Activated T-helper 1 cell treated with anti-CD3 and anti-CD28 coated beads, Interleukin-12 subunit alpha, Interleukin-12 subunit beta, Interleukin-2, Interleukin-4 antibody, amounts not matched to agents 30 ng/mL and 10 ng/mL and 1 ng/mL, durations not matched to agents 14 hours and 24 hours and 36 hours (primary cell): ENCODE measurements at regions of chr11 and their contacts with region 1.

Region 1: GRCh38 chr11:1572197-1573076 is at the start of gene DUSP8:
- DNase-seq: peak; percentile 89
- H3K4me3 Mint-ChIP-seq: peak within 1 kb of the TSS; percentile 37
- H3K27ac Mint-ChIP-seq: no peak within 1 kb of the TSS
- H3K4me1 Mint-ChIP-seq: no peaks in the 10 kb centered on the region
- H3K27me3 Mint-ChIP-seq: peaks cover 28% of the 10 kb centered on the region
- total RNA-seq, gene DUSP8: 2.3 and 2.4 TPM in 2 replicates

Region 2: GRCh38 chr11:910589-911195 is 661.7 kb before region 1 on chr11 and contains the start of gene CHID1:
- intact Hi-C with region 1: loop called (anchors 5 kb)
- DNase-seq: peak; percentile 89
- H3K4me3 Mint-ChIP-seq: peak within 1 kb of the TSS; percentile 96
- H3K27ac Mint-ChIP-seq: peak within 1 kb of the TSS; percentile 93
- H3K4me1 Mint-ChIP-seq: peaks cover 18% of the 10 kb centered on the region
- H3K27me3 Mint-ChIP-seq: no peaks in the 10 kb centered on the region
- total RNA-seq, gene CHID1: 108 and 110 TPM in 2 replicates

Region 3: DNA sequence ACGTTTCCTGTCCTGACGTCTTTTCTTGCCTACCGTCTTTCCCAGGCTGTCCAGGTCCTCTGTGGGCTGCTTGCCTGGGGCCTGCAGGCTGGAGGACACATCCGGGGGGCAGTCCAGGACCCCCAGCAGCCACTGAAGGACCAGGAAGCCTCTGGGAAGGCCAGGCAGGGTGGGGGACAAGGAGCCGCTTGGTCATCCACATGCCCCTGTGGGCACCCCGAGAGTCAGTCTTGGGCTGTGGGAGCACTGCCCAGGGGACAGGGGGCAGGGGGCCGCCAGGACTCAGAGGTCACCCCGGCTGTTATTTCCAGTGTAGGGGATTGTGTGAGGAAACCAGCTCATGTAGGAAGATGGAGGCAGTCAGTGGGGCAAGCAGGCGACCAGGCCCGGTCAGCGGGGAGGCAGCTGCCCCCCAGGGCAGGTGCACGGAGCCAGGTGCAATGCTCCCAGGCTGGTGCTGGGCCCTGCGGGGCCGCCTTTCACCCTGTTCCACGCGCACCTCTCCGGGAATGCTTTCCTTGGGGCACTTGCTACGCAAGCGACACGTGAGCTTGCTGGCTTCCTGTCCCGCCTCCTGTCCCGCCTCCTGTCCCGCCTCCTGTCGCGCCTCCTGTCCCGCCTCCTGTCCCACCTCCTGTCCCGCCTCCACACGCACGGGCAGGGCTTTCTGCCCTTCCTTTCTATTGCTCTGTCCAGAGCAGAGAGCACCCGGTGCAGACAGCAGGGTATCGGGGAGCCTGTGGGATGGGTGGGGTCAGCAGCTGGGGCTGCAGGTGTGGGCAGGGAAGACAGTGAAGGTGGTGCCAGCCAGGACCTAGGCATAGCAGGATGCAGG is 310.0 kb before region 1 on chr11:
- intact Hi-C with region 1: loop called (anchors 1 kb)
- DNase-seq: peak; percentile 70
- H3K4me3 Mint-ChIP-seq: peak overlapping the region; percentile 42
- H3K27ac Mint-ChIP-seq: peak overlapping the region; percentile 63
- H3K4me1 Mint-ChIP-seq: peaks cover 4% of the 10 kb centered on the region
- H3K27me3 Mint-ChIP-seq: no peaks in the 10 kb centered on the region

Region 4: DNA sequence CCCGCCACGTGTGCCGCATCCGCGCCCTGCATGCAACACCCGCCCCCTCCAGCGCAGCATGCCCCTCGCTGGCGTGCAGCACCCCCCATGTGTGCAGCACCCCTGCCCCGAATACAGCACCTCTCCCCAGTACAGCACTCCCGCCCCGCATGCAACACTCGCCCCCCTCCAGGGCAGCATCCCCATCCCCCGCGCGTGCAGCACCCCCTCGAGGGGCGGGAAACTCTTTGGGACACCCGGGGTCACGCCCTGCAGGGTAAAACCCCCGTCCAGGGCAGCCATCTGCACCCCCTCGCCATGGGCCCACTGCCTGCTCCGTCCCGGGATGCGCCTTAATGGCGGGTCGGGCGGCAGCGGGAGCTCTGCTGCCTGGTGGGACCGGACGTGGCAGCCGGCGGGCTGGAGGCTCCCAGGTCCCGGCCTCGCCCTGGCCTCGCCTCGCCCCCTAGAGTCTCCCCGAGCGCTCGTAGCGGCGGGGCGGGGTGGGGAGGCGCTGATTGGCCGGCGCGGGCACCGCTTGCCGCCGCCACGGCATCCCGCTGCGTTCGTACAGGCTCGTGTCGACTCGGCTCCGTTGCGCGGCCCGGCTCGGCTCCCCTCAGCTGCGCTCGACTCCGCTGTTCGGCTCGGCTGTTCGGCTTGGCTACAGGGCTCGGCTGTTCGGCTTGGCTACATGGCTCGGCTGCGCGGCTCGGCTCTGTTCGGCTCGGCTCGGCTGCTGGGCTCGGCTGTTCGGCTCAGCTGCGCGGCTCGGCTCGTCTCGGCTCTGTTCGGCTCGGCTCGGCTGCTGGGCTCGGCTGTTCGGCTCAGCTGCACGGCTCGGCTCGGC is 183.1 kb before region 1 on chr11:
- intact Hi-C with region 1: loop called (anchors 5 kb)
- DNase-seq: peak; percentile 93
- H3K4me3 Mint-ChIP-seq: peak overlapping the region; percentile 30
- H3K27ac Mint-ChIP-seq: no peak overlapping the region
- H3K4me1 Mint-ChIP-seq: peaks cover 5% of the 10 kb centered on the region
- H3K27me3 Mint-ChIP-seq: peaks cover 33% of the 10 kb centered on the region

Region 5: DNA sequence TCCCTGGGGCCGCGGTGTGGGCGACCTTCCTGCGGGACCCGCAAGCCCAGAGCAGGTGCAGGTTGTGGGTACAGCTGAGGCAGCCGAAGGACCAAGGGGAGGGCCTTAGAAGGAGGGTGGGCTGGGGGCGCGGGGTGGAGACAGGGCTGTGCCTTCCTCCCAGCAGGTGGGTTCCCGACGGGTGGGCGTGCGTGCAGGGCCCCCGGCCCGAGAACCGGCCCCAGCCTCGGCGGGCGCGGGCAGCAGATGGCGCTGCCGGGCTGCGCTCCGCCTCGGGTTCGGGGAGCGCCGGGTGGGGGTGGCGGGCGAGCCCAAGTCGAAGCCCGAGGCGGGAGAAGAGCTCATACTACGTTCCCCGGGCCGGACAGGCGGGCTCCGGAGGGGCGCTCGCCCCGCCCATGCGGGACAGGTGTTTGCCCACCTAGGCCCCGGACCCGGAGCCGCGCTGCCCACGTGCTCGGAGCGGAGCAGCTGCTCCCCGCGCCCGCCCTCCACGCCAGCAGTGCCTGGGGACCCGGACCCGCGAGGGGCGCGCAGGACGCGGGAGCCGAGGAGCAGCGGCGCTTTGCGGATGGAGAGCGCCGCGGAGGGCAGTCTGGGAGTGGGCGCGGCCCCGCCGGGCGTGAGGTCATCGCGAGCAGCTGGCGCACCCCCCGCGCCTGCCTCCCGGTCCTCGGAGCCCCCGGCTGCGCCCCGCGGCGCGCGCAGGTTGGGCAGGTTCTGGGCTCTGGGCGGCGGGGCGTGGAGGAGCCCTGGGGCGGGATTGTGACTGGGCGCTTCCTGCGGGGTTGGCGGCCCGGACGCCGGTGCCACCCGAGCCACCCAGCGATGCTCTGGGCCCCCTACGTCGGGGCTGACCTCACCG is 25.7 kb before region 1 on chr11:
- intact Hi-C with region 1: loop called (anchors 1 kb)
- DNase-seq: no peak
- H3K4me3 Mint-ChIP-seq: no peak overlapping the region
- H3K27ac Mint-ChIP-seq: no peak overlapping the region
- H3K4me1 Mint-ChIP-seq: no peaks in the 10 kb centered on the region
- H3K27me3 Mint-ChIP-seq: peaks cover 30% of the 10 kb centered on the region

Region 6: GRCh38 chr11:3378426-3379423 is 1806.3 kb after region 1 on chr11 and contains the start of gene ZNF195:
- intact Hi-C with region 1: loop called (anchors 10 kb)
- DNase-seq: peak; percentile 98
- H3K4me3 Mint-ChIP-seq: peak within 1 kb of the TSS; percentile 96
- H3K27ac Mint-ChIP-seq: peak within 1 kb of the TSS; percentile 94
- H3K4me1 Mint-ChIP-seq: peaks cover 30% of the 10 kb centered on the region
- H3K27me3 Mint-ChIP-seq: no peaks in the 10 kb centered on the region
- total RNA-seq, gene ZNF195: 41.2 and 42.8 TPM in 2 replicates